ENCODE measurements at regions of chr19 and their contacts with region 1.

Region 1: DNA sequence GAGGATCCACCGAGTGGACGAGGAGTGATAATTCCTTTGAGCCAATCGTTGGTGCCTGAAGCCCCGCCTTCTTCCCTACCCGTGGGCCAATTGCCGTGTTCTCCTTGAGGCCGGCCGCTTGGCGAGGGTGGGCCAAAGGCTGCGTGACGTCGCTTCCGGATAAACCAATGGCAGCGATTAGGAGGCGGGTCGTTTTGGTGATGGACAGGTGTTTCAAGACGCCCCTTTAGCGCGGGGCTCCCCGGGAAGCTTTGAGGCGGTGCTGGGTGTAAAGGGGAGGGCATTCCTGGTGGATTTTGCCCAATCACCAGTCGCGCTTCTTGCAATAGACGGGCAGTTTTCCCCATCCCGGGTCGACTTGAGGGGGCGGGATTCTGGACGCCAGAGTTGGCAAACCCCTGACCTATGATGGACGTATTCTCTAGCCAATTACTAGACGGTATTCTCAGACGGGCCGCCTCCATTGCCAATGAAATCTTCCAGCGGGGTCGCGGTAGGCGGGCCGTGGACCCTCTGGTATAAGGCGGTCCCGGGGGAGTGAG is 310 bp upstream of the PRMT1 start:
- DNase-seq: peak; percentile 100
- H3K4me3 ChIP-seq: peak overlapping the region; percentile 96
- H3K27ac ChIP-seq: peak overlapping the region; percentile 84
- H3K4me1 ChIP-seq: peaks cover 60% of the 10 kb centered on the region
- CTCF ChIP-seq: no peak

Region 2: GRCh38 chr19:48637170-48637947 is 1039.4 kb before region 1 on chr19 and contains the start of gene DBP:
- CTCF ChIA-PET with region 1: no interaction called
- POLR2A ChIA-PET with region 1: no interaction called
- intact Hi-C with region 1: loop called (anchors 5 kb)
- DNase-seq: peak; percentile 100
- H3K4me3 ChIP-seq: peak within 1 kb of the TSS; percentile 76
- H3K27ac ChIP-seq: peak within 1 kb of the TSS; percentile 94
- H3K4me1 ChIP-seq: peaks cover 46% of the 10 kb centered on the region
- CTCF ChIP-seq: no peak
- total RNA-seq, gene DBP: 20.8 and 35.6 TPM in 2 replicates

Region 3: GRCh38 chr19:49127674-49128544 is 548.9 kb before region 1 on chr19:
- CTCF ChIA-PET with region 1: no interaction called
- POLR2A ChIA-PET with region 1: no interaction called
- intact Hi-C with region 1: loop called (anchors 5 kb)
- DNase-seq: peak; percentile 96
- H3K4me3 ChIP-seq: peak overlapping the region; percentile 67
- H3K27ac ChIP-seq: no peak overlapping the region
- H3K4me1 ChIP-seq: peaks cover 16% of the 10 kb centered on the region
- CTCF ChIP-seq: no peak

Region 4: DNA sequence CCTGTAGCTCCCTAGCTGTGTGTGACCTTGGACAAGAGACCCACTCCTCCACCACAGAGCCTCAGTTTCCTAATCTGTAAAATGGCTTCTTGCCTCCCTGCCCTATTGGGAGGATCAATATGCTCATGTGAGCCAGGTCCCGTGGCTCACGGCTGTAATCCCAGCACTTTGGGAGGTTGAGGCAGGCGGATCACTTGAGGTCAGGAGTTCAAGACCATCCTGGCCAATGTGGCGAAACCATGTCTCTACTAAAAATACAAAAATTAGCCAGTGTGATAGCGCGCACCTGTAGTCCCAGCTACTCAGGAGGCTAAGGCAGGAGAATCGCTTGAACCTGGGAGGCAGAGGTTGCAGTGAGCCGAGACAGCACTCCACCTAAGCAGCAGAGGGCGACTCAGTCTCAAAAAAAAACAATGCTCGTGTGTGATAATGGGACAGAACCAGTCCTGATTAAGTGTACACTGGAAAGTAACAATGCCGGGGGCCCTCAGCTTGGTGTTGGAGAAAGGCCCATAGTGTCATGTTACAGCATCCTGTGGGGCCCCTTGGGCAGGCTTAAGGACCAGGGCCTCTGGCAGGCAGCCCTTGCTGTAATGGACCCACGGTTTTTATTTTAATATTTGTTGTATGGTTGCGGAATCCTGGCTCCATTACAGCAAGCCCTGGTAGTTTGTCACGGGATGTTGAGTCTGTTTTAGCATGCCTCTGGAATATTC is 173.7 kb before region 1 on chr19:
- CTCF ChIA-PET with region 1: no interaction called
- POLR2A ChIA-PET with region 1: interaction called, 3 read pairs
- intact Hi-C with region 1: loop called (anchors 5 kb)
- DNase-seq: peak; percentile 74
- H3K4me3 ChIP-seq: no peak overlapping the region
- H3K27ac ChIP-seq: no peak overlapping the region
- H3K4me1 ChIP-seq: peaks cover 36% of the 10 kb centered on the region
- CTCF ChIP-seq: peak; percentile 80

Region 5: GRCh38 chr19:49590071-49590970 is 86.4 kb before region 1 on chr19:
- CTCF ChIA-PET with region 1: no interaction called
- POLR2A ChIA-PET with region 1: interaction called, 5 read pairs
- intact Hi-C with region 1: loop called (anchors 2 kb)
- DNase-seq: peak; percentile 99
- H3K4me3 ChIP-seq: peak overlapping the region; percentile 94
- H3K27ac ChIP-seq: peak overlapping the region; percentile 96
- H3K4me1 ChIP-seq: peaks cover 13% of the 10 kb centered on the region
- CTCF ChIP-seq: peak; percentile 16; the same call in 1 of the 2 replicates

Region 6: DNA sequence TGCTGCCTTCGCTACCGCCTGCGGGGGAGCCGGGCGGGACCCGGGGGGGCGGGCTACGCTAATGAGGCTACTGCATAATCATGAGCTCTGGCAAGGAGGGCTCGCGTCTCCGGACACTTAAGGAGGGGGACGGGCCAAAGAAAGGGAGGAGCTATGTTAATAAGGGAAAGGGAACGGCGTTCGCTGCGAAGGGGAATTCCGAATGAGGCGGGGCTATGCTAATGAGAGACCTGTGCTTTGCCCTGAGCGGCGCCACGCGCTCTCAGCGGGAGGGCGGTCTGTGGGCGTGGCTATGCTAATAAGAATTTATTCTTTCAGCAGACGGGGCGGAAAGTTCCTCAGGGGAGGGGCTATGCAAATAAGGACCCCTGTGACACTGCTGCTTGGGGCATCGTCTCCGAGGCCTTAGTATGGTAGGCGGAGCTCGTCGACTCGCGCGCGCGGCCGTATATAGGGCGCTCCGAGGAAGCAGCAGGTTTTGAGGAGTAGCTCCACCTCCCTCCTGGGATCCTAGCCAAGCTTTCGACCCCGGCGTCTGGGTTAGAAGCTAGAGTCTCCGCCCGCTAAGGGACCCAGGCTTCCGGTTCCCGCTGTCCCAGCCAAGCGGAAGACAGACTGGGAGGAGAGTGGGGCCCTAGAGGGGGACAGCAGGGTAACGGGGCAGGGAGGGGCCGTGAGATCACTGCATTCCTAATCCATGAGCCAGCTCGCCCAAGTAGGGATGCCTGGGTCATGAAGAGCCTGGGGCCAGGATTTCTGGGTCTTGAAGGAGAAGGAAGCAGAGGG is 36.5 kb before region 1 on chr19 and contains the start of gene RRAS:
- CTCF ChIA-PET with region 1: interaction called, 5 read pairs
- POLR2A ChIA-PET with region 1: interaction called, 18 read pairs
- intact Hi-C with region 1: loop called (anchors 1 kb)
- DNase-seq: peak; percentile 100
- H3K4me3 ChIP-seq: peak within 1 kb of the TSS; percentile 75
- H3K27ac ChIP-seq: peak within 1 kb of the TSS; percentile 88
- H3K4me1 ChIP-seq: peaks cover 21% of the 10 kb centered on the region
- CTCF ChIP-seq: no peak
- total RNA-seq, gene RRAS: 3.4 and 4.7 TPM in 2 replicates

Region 7: DNA sequence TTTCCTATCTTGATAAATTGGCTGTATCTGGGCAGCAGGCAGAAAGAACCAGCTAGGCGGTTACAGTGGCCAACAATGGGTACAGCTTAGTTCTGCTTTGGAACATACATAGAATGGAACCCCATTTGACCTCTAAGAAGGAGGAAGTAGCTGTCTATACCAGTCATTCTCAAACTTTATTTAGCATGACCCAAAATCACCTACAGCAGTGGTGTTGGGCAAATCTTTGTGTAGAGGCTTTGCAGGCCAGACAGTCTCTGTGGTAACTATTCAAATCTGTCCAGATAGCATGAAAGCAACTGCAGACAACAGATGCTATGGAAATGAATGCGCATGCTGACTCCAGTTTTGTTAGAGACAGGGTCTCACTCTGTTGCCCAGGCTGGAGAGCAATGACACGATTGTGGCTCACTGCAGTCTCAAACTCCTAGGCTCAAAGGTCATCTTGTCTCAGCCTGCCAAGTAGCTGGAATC is 664.4 kb after region 1 on chr19:
- CTCF ChIA-PET with region 1: no interaction called
- POLR2A ChIA-PET with region 1: no interaction called
- intact Hi-C with region 1: loop called (anchors 10 kb)
- DNase-seq: peak; percentile 76
- H3K4me3 ChIP-seq: peak overlapping the region; percentile 74
- H3K27ac ChIP-seq: peak overlapping the region; percentile 98
- H3K4me1 ChIP-seq: peaks cover 75% of the 10 kb centered on the region
- CTCF ChIP-seq: no peak

Measured in OCI-LY7 (cell line).